Activated naive CD4-positive, alpha-beta T cell treated with anti-CD3 and anti-CD28 coated beads, Interleukin-2, amount 10 ng/mL, durations not matched to agents 7 days and 5 days (primary cell): ENCODE measurements at regions of chr10 and their contacts with region 1.

Region 1: GRCh38 chr10:6473901-6474370 is 106.1 kb downstream of the PRKCQ start:
- DNase-seq: peak; percentile 51
- H3K4me3 Mint-ChIP-seq: peak overlapping the region; percentile 79
- H3K27ac Mint-ChIP-seq: peak overlapping the region; percentile 94
- H3K4me1 Mint-ChIP-seq: peaks cover 72% of the 10 kb centered on the region
- H3K27me3 Mint-ChIP-seq: no peaks in the 10 kb centered on the region

Region 2: DNA sequence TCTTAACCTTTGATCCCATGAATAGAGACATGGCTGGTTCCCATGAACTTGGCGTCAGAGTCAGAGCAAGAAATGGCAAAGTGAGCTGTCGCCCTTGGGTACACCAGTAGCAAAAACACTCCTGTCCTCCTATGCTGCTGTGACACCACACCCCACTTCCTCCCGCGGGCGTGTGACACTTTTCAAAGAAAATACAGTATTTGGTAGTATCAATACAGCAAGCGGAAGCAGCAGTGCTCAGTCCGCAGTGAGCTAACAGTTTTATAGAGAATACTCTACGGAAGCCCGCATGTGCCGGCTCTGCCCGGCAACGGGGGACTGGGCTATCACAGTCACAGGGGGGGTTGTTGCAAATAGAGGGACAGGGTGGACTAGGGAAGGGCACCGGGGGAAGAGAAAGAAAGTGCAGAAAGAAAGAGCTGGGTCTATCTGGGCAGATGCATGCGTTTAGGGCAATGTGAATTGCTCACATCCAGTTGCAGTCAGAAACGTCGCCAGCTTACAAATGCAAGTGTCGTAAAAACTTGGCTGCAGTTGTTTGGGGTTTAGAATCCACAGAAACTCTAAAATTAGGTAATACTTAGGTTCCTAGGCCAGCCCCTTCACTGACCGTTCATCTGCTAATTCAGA is 56.4 kb after region 1 on chr10:
- CTCF ChIA-PET with region 1: interaction called, 10 read pairs
- DNase-seq: peak; percentile 91
- H3K4me3 Mint-ChIP-seq: peak overlapping the region; percentile 70
- H3K27ac Mint-ChIP-seq: peak overlapping the region; percentile 97
- H3K4me1 Mint-ChIP-seq: peaks cover 84% of the 10 kb centered on the region
- H3K27me3 Mint-ChIP-seq: no peaks in the 10 kb centered on the region